OCI-LY7 (cell line): ENCODE measurements at regions of chr5 and their contacts with region 1.

Region 1: DNA sequence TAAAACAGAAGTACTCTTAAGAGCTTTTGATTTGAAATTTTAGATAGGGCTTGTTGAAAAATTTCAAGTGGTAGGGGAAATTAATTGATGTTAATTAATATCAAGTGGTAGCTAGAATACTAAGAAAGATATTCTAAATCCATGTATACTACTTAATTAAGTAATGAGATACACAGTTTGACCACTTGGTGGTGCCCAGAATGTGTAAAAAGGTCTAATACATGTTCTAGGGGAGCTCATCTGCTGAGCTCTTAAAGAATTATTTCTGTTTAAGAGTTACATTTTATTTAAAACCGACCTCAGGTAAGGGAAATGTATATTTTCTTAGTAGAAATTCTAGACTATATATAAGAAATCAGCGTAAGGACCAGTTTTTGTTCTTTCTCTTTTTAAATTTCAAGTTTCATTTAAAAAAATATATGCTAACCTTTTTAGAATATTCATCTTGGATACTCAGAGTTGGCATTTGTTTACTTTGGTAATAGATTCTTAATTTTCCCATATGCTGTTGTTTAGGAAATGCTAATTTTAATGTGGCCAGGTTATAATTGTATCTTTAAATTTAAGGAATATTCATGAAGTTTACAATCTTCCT is 61.5 kb downstream of the LNPEP start:
- DNase-seq: peak; percentile 70
- H3K4me3 ChIP-seq: no peak overlapping the region
- H3K27ac ChIP-seq: no peak overlapping the region
- H3K4me1 ChIP-seq: no peaks in the 10 kb centered on the region
- CTCF ChIP-seq: peak; percentile 92

Region 2: DNA sequence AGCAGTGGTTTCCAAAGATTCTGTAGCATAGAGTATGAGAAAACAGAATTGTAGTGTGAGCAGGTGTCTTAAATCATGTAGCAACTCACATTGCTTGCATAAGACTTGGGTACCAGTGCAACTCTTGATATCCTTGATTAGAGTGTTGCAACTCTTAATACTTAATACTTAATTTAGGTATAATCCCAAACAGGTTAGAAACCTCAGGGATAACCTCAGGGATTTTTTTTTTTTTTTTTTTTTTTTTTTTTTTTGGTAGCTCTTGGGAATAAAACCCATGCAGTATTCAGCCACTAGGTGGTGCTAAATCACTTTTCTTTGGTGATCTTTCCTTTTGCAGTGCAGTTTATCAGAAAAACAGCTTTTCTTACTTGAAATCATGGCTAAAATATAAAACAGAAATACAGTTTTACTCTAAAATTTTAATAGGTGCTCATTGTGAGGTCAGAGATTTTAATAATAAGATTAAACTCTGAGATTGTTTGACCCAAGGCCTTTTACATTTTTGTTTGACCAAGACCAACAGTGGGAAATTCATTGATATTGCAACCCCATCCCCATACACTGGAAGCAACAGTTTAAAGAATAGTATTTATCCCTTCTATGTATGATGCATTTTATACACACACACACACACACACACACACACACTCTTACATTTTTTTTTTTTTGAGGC is 244.9 kb before region 1 on chr5:
- CTCF ChIA-PET with region 1: no interaction called
- POLR2A ChIA-PET with region 1: no interaction called
- intact Hi-C with region 1: loop called (anchors 10 kb)
- DNase-seq: peak; percentile 82
- H3K4me3 ChIP-seq: no peak overlapping the region
- H3K27ac ChIP-seq: no peak overlapping the region
- H3K4me1 ChIP-seq: no peaks in the 10 kb centered on the region
- CTCF ChIP-seq: peak; percentile 91

Region 3: GRCh38 chr5:96973532-96974401 is 23.6 kb before region 1 on chr5:
- CTCF ChIA-PET with region 1: interaction called, 4 read pairs
- POLR2A ChIA-PET with region 1: interaction called, 10 read pairs
- intact Hi-C with region 1: no loop called
- DNase-seq: peak; percentile 18
- H3K4me3 ChIP-seq: peak overlapping the region; percentile 19
- H3K27ac ChIP-seq: peak overlapping the region; percentile 16
- H3K4me1 ChIP-seq: peaks cover 72% of the 10 kb centered on the region
- CTCF ChIP-seq: no peak

Region 4: DNA sequence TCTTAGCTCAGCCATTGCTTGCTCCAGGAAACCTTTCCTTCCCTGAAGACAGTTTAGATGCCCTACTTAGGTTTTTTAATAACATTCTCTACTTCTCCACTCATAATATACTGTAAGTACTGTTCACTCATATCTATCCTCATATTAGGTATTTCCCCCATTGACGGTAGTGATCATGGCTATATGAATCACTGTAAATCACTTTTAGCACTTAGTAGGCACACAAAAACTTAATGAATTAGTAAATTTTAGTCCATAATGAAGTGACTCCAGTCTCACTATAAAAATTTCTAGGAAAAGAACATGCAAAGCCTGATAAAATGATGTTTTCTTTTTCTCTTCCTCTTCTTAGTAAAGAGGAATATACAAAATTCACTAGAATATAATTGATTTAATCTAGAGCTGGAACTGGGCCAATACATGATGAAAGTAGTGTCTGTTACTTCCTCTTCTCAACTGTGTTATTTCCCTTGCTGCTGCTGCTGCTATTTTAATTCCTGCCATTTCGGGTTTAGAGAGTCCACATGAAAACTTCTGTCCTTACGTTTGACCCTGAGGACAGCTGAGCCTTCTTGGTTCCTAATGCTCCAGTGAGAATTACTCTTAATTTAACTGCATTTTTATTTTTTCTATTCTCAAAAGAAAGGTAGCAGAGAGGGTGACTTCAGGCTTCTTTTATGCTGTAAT is 12.0 kb after region 1 on chr5:
- CTCF ChIA-PET with region 1: interaction called, 3 read pairs
- POLR2A ChIA-PET with region 1: interaction called, 15 read pairs
- intact Hi-C with region 1: no loop called
- DNase-seq: peak; percentile 86
- H3K4me3 ChIP-seq: peak overlapping the region; percentile 48
- H3K27ac ChIP-seq: peak overlapping the region; percentile 89
- H3K4me1 ChIP-seq: peaks cover 37% of the 10 kb centered on the region
- CTCF ChIP-seq: no peak

Region 5: GRCh38 chr5:97142521-97143254 is 145.3 kb after region 1 on chr5 and contains the start of gene LIX1:
- CTCF ChIA-PET with region 1: interaction called, 4 read pairs
- POLR2A ChIA-PET with region 1: interaction called, 7 read pairs
- intact Hi-C with region 1: loop called (anchors 2 kb)
- DNase-seq: peak; percentile 75
- H3K4me3 ChIP-seq: no peak within 1 kb of the TSS
- H3K27ac ChIP-seq: no peak within 1 kb of the TSS
- H3K4me1 ChIP-seq: peaks cover 5% of the 10 kb centered on the region
- CTCF ChIP-seq: peak; percentile 87
- total RNA-seq, gene LIX1: 0.18 and 0.44 TPM in 2 replicates

Region 6: GRCh38 chr5:97162045-97162444 is 164.7 kb after region 1 on chr5:
- CTCF ChIA-PET with region 1: no interaction called
- POLR2A ChIA-PET with region 1: interaction called, 6 read pairs
- intact Hi-C with region 1: loop called (anchors 5 kb)
- DNase-seq: peak; percentile 74
- H3K4me3 ChIP-seq: no peak overlapping the region
- H3K27ac ChIP-seq: no peak overlapping the region
- H3K4me1 ChIP-seq: peaks cover under 1% of the 10 kb centered on the region
- CTCF ChIP-seq: peak; percentile 100